ENCODE measurements at regions of chr22 and their contacts with region 1.

Region 1: GRCh38 chr22:23128269-23129108 is 13.3 kb downstream of the RSPH14 start:
- DNase-seq: no peak

Region 2: GRCh38 chr22:22463855-22464540 is 664.5 kb before region 1 on chr22:
- intact Hi-C with region 1: loop called (anchors 10 kb)
- DNase-seq: no peak

Measured in cardiac septum (tissue), 1 donor.